Endothelial cell of umbilical vein (primary cell): ENCODE measurements at regions of chr3 and their contacts with region 1.

Region 1: DNA sequence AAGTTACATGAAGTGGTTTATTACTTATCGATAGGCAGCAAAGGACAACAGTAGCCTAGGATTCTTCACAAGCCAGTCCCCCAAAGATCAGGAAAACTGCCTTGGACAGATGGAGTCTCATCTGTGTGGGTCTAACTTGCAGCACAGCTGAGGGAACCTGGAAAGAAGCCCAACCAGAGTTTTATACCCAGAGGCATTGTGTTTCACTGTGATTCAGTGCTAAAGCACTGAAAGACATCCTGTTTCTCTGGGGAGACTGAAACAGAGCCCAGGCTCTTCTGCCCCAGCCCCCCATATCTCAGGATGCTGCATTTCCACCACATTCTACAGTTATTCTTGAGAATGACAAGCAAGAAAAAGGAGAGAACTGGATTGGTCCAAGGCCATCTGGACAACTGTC is 48.2 kb upstream of the PYDC2 start:
- DNase-seq: peak; percentile 97
- H3K4me3 ChIP-seq: no peak overlapping the region
- H3K27ac ChIP-seq: peak overlapping the region; percentile 25
- H3K4me1 ChIP-seq: peaks cover 11% of the 10 kb centered on the region
- H3K27me3 ChIP-seq: no peaks in the 10 kb centered on the region
- CTCF ChIP-seq: no peak
- POLR2A ChIP-seq: no peak

Region 2: DNA sequence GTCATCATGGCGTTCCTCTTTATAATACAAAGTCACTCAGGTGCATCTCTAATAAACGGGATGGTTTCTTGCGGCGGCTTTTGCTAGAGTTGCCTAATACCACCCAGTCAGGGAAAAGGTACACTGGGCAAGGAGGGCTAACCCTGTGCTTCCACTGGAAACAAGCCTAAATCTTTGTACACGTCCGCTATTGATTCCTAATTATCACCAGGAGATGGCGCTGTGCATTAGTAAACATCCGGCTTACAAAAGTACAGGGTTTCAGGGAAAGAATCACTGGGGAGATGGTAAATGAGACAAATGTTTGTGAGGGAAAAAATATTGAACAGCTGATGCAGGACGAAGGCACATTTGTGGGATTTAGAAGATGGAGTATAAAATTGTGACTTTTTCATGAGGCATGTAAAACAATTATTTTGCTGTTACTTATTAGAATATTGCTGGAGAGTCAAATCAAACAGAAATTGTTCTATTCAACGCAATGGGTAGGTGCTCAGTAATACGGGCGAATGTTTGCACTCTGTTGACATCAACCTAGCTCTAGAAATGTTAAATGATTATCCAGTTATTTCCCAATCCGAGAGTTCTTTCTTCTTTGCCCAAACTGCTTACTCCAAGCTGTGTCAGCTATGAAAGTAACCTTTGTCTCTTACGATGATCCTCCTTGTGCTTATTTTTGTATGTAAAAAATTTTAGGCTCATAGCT is 600.8 kb before region 1 on chr3:
- CTCF ChIA-PET with region 1: no interaction called
- POLR2A ChIA-PET with region 1: no interaction called
- dilution Hi-C with region 1: no loop called
- intact Hi-C with region 1: loop called (anchors 5 kb)
- DNase-seq: peak; percentile 33
- H3K4me3 ChIP-seq: no peak overlapping the region
- H3K27ac ChIP-seq: no peak overlapping the region
- H3K4me1 ChIP-seq: no peaks in the 10 kb centered on the region
- H3K27me3 ChIP-seq: no peaks in the 10 kb centered on the region
- CTCF ChIP-seq: peak; percentile 16 to 53
- POLR2A ChIP-seq: no peak

Region 3: DNA sequence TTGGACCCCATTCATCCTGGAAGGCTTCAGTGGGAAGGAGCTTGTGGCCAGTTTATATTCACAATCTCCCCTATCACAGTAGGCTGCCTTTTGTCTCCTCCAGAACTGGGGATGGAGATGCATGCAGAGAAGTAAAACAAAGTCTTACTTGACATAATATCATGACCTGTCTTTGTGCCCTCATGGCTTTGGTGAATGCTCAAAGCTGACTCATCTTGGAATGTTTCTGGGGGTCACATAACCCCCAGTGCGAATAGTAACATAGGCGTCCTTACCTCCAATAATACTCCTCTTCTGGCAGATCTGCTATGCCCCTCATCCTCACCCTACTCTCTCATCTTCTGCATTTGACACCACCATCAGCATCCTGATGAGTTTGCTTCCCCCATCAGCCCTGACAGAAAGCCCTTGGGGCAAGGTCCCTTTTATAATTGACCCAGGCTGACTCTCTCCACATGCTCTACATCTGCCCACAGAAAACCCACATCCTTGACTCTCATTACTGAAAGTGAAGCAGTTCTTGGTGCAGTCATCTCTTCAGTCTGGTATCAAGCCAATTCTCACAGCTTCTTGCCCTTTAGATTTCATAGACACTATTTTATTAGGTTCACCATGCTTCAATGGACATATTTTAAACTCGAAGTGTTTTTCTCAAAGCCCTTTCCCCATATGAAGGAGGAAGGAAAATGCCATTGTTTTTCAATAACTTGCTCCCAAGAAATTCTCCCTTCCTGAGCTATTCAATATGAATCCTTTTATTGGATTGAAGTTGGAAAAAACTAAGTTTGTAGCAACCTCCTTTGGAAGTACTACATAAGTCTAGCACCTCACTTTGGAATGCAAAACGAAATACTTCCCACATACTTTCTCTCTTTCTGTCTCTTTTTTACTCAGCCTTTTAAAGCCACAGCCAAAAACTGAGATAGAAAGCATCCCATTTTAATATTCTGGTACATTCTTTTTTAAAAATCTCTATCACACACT is 177.1 kb before region 1 on chr3:
- CTCF ChIA-PET with region 1: no interaction called
- POLR2A ChIA-PET with region 1: no interaction called
- dilution Hi-C with region 1: no loop called
- intact Hi-C with region 1: loop called (anchors 5 kb)
- DNase-seq: no peak
- H3K4me3 ChIP-seq: no peak overlapping the region
- H3K27ac ChIP-seq: no peak overlapping the region
- H3K4me1 ChIP-seq: peaks cover 42% of the 10 kb centered on the region
- H3K27me3 ChIP-seq: no peaks in the 10 kb centered on the region
- CTCF ChIP-seq: no peak
- POLR2A ChIP-seq: no peak

Region 4: GRCh38 chr3:191809326-191809949 is 396.7 kb after region 1 on chr3:
- CTCF ChIA-PET with region 1: interaction called, 5 read pairs
- POLR2A ChIA-PET with region 1: no interaction called
- dilution Hi-C with region 1: no loop called
- intact Hi-C with region 1: loop called (anchors 2 kb)
- DNase-seq: no peak
- H3K4me3 ChIP-seq: no peak overlapping the region
- H3K27ac ChIP-seq: no peak overlapping the region
- H3K4me1 ChIP-seq: no peaks in the 10 kb centered on the region
- H3K27me3 ChIP-seq: no peaks in the 10 kb centered on the region
- CTCF ChIP-seq: no peak
- POLR2A ChIP-seq: no peak

Region 5: GRCh38 chr3:192188218-192188835 is 775.6 kb after region 1 on chr3:
- CTCF ChIA-PET with region 1: interaction called, 4 read pairs
- POLR2A ChIA-PET with region 1: no interaction called
- dilution Hi-C with region 1: no loop called
- intact Hi-C with region 1: loop called (anchors 1 kb)
- DNase-seq: peak; percentile 46
- H3K4me3 ChIP-seq: no peak overlapping the region
- H3K27ac ChIP-seq: no peak overlapping the region
- H3K4me1 ChIP-seq: peaks cover 13% of the 10 kb centered on the region
- H3K27me3 ChIP-seq: no peaks in the 10 kb centered on the region
- CTCF ChIP-seq: peak; percentile 72 to 73
- POLR2A ChIP-seq: no peak